ENCODE measurements at regions of chr18 and their contacts with region 1.

Region 1: DNA sequence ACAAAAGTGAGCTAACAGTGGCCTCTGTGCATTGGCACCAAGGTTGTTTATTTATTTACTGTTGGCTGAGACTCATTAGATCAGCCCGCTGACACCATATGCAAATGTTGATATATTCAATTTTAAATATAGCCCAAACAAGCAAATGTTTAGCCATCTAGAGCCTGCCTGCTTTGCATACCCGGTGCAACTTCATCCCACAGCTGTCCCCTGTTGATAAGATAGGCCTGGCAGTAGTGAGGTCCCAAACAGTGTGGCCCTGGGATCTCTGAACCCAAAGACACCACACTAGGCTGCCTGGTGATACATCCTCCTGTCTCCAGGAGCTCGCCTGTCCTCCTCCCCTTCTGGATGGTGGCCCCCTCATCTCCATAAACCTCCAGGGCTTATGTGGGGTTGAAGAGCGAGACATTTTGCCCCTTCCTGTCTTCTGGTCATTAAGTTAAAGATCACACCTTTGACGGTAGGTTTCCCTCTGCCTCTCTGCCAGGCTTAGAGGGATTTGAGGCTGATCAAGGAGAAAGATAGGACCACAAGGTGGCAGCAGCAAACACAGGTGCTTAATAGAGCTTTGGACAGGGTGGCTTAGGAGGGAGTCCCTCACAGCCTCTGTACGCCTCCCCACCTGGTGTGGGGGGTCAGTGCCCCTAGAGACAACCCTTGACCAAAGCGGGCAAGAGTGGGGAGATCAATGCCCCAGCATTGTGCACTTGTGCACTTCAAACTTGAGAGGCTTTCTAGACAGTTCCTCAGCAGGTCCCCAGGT is 23.7 kb upstream of the MYO5B start:
- DNase-seq: peak; percentile 33
- H3K4me3 ChIP-seq: no peak overlapping the region
- H3K27ac ChIP-seq: no peak overlapping the region
- H3K4me1 ChIP-seq: no peaks in the 10 kb centered on the region
- H3K27me3 ChIP-seq: no peaks in the 10 kb centered on the region
- CTCF ChIP-seq: peak; percentile 38 to 70

Region 2: DNA sequence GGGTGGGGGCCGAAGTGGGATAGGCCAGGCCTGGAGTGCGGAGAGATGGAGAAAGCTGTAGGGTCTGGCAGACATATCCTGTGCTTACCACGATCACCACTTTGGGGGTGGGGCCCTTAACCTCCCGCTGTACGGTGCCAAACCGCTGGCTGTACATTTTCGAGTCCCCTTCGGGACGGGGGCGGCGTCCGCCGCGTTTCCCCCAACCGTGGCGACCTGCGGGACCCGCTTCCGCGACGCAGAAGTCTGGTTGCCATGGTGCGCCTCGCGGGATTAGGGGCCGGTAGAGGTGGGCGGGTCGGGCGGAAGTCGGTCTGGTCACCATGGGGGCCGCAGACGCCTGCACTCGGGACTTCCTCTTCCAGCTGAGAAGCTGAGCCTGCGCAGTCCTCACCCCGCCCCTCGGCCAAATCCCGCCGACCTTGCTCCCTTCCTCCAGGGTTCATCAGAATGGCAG is 47.7 kb after region 1 on chr18 and contains the start of gene CFAP53:
- CTCF ChIA-PET with region 1: interaction called, 3 read pairs
- dilution Hi-C with region 1: no loop called
- in situ Hi-C with region 1: no loop called
- intact Hi-C with region 1: loop called (anchors 2 kb)
- DNase-seq: peak; percentile 63
- H3K4me3 ChIP-seq: peak within 1 kb of the TSS; percentile 64 to 84 (median 65)
- H3K27ac ChIP-seq: peak within 1 kb of the TSS; percentile 28
- H3K4me1 ChIP-seq: peaks cover 12% of the 10 kb centered on the region
- H3K27me3 ChIP-seq: no peaks in the 10 kb centered on the region
- CTCF ChIP-seq: no peak
- total RNA-seq, gene CFAP53: 0.67 to 1.7 TPM

Region 3: DNA sequence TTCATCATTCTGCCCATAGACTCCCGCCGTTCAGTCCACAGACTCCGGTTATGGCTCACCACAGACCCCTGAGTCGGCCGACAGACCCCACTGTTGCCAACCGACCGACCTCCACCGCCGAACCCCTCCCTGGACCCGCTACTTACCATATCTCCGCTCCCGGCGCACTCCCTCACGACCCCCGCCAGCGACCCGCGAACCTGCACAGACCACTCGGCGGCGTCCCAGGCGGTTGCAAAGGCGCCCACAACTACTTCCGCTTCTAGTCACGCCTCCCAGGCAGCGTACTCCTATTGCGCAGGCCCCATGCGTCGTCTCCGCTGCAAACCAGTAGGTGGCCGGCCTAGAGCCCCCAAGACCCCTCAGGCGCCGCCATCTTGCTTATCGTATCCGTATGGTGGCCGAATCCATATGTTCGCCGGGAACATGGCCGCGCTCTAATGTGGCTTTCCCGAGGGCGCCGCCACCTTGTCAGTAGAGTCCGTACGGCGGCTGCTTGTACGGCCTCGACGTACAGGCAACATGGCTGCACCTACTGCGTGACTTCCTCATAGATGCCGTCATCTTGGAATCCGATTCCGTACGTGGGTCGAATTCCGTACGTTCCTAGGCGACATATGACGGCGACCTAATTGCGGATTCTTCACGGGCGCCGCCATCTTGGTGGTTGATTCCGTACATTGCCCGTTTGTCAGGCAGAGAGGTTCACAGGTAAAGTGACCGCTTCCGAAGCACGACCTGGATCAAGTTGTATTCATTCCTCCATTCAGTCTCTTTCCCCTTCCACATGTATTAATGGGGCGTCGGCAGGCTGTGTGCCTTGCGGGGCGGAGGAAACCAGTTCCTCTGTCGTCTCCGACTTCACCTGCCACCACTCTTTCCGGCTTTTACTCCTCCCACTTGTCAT is 69.1 kb after region 1 on chr18 and contains the start of gene CXXC1:
- CTCF ChIA-PET with region 1: no interaction called
- dilution Hi-C with region 1: no loop called
- in situ Hi-C with region 1: no loop called
- intact Hi-C with region 1: loop called (anchors 1 kb)
- DNase-seq: peak; percentile 99
- H3K4me3 ChIP-seq: peak within 1 kb of the TSS; percentile 88 to 97 (median 95)
- H3K27ac ChIP-seq: peak within 1 kb of the TSS; percentile 66
- H3K4me1 ChIP-seq: peaks cover 26% of the 10 kb centered on the region
- H3K27me3 ChIP-seq: no peaks in the 10 kb centered on the region
- CTCF ChIP-seq: peak; percentile 39 to 51
- total RNA-seq, gene CXXC1: 27.7 to 78.2 TPM

Region 4: GRCh38 chr18:50429207-50429948 is 210.8 kb after region 1 on chr18:
- CTCF ChIA-PET with region 1: interaction called, 4 read pairs
- dilution Hi-C with region 1: no loop called
- in situ Hi-C with region 1: no loop called
- intact Hi-C with region 1: loop called (anchors 2 kb)
- DNase-seq: no peak
- H3K4me3 ChIP-seq: no peak overlapping the region
- H3K27ac ChIP-seq: no peak overlapping the region
- H3K4me1 ChIP-seq: no peaks in the 10 kb centered on the region
- H3K27me3 ChIP-seq: no peaks in the 10 kb centered on the region
- CTCF ChIP-seq: peak; percentile 31 to 43

Region 5: DNA sequence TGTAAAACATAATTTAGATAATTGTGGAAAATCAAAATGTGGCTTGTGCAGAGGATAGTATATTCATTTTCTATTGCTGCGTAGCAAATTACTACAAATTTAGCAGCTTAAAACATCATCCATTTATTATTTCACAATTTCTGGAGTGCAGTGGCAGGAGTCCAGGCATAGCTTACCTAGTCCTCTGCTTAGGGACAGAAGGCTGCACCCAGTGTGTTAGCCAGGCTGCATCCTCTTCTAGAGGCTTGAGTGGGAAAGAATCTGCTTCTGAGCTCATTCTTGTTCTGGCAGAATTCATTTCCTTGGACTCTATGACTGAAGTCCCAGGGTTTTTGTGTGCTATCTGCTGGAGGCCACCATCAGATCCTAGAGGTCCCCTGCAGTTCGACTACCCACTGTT is 561.5 kb after region 1 on chr18:
- CTCF ChIA-PET with region 1: no interaction called
- dilution Hi-C with region 1: no loop called
- in situ Hi-C with region 1: no loop called
- intact Hi-C with region 1: loop called (anchors 5 kb)
- DNase-seq: no peak
- H3K4me3 ChIP-seq: no peak overlapping the region
- H3K27ac ChIP-seq: no peak overlapping the region
- H3K4me1 ChIP-seq: no peaks in the 10 kb centered on the region
- H3K27me3 ChIP-seq: peaks cover 2% of the 10 kb centered on the region
- CTCF ChIP-seq: no peak